ENCODE measurements at regions of chr19 and their contacts with region 1.

Region 1: GRCh38 chr19:55080968-55081772 is 5.5 kb downstream of the EPS8L1 start:
- DNase-seq: peak; percentile 90 to 92
- H3K4me3 ChIP-seq: peak overlapping the region; percentile 80
- H3K4me3 Mint-ChIP-seq: peak overlapping the region; percentile 93
- H3K27ac Mint-ChIP-seq: peak overlapping the region; percentile 94
- H3K4me1 ChIP-seq: peaks cover 15% of the 10 kb centered on the region
- H3K4me1 Mint-ChIP-seq: peaks cover 24% of the 10 kb centered on the region
- H3K27me3 ChIP-seq: no peaks in the 10 kb centered on the region
- H3K27me3 Mint-ChIP-seq: no peaks in the 10 kb centered on the region
- CTCF ChIP-seq: no peak

Region 2: DNA sequence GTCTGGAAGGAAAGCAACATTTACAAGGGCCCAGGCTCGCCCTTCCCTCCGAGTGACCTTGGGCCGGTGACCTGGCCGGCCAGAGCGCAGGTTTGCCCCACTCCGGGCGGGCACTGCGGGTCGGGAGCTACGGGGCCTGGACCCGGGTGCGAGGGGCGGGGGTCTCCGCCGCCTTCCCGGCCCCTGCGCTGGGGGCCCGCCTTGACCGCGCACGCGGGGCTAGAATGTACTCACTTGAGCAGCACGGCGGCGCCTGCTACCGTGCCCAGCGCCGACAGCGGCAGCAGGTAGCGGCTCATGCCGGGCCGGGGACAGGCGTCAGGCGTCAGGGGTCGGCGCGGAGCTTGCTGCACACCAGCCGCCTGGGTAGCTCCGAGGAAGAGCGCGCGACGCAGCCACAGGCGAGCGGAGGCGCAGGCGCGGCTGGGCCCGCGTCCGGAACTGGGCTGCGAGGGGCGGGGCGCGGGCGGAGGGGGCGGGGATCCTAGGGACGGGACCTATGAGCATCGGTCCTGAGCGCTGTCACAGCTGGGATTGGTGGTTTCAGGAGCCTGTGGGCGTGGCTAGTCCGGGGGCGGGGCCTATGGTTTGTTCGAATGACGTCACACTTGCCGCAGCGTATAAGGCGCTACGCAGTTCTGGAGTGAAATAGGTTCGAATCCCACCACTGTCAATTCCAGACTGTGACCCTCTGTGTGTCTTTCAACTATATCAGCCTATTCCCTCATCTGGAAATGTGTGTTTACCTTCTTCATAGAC is 18.3 kb before region 1 on chr19 and contains the start of gene RDH13:
- CTCF ChIA-PET with region 1: no interaction called
- POLR2A ChIA-PET with region 1: interaction called, 12 read pairs
- intact Hi-C with region 1: loop called (anchors 2 kb)
- DNase-seq: peak; percentile 98
- H3K4me3 ChIP-seq: peak within 1 kb of the TSS; percentile 91
- H3K4me3 Mint-ChIP-seq: peak within 1 kb of the TSS; percentile 76
- H3K27ac Mint-ChIP-seq: peak within 1 kb of the TSS; percentile 77
- H3K4me1 ChIP-seq: 0 out of 2 replicates have a peak, but pooled peaks cover 6% of the 10 kb centered on the region
- H3K4me1 Mint-ChIP-seq: peaks cover 11% of the 10 kb centered on the region
- H3K27me3 ChIP-seq: no peaks in the 10 kb centered on the region
- H3K27me3 Mint-ChIP-seq: no peaks in the 10 kb centered on the region
- CTCF ChIP-seq: no peak
- total RNA-seq, gene RDH13: 43.3 and 49.8 TPM in 2 replicates